AG04449 (cell line): ENCODE measurements at regions of chr9 and their contacts with region 1.

Region 1: GRCh38 chr9:73167614-73168013 is 15.9 kb downstream of the ANXA1 start:
- DNase-seq: no peak
- H3K4me3 ChIP-seq: no peak overlapping the region
- CTCF ChIP-seq: no peak

Region 2: DNA sequence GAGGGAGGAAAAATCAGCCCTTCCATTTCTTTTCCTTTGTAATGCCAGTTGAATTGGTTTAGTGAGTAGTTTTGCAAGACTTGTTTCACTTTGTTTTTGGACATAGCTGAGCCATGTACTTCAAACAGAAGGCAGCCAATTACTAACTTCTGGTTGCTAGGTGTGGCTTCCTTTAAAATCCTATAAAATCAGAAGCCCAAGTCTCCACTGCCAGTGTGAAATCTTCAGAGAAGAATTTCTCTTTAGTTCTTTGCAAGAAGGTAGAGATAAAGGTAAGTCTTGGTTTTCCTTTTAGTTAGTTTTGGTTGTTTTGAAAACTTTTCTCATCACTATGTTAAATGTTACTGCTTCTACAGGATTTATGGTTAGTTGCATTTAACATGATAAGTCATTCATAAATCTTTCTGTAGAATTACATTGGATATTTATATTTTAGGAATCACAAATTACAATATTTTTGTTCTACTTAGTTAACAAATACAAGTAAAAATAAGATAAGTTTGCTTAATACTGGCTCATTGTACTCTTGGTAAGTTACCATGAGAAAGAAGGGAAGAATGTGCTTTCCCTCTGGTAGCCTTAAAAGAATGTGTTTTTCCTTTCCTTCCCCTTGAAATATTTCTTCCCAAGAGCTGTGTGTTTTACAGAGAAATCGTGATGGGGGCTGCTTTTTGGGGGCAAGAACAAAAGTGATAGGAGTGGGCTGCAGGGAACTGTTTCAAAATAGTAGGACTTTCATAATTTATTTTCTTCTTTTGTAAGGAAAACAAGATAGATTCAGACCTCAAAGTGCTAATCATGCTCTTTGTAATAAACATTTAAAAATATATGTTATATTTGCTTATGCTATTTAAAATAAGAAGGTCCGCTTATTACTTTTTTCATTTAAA is 15.7 kb before region 1 on chr9 and contains the start of gene ANXA1:
- CTCF ChIA-PET with region 1: interaction called, 9 read pairs
- POLR2A ChIA-PET with region 1: interaction called, 11 read pairs
- DNase-seq: peak; percentile 41
- H3K4me3 ChIP-seq: peak within 1 kb of the TSS; percentile 71
- CTCF ChIP-seq: no peak